PC-3 (cell line): ENCODE measurements at regions of chr7 and their contacts with region 1.

Region 1: DNA sequence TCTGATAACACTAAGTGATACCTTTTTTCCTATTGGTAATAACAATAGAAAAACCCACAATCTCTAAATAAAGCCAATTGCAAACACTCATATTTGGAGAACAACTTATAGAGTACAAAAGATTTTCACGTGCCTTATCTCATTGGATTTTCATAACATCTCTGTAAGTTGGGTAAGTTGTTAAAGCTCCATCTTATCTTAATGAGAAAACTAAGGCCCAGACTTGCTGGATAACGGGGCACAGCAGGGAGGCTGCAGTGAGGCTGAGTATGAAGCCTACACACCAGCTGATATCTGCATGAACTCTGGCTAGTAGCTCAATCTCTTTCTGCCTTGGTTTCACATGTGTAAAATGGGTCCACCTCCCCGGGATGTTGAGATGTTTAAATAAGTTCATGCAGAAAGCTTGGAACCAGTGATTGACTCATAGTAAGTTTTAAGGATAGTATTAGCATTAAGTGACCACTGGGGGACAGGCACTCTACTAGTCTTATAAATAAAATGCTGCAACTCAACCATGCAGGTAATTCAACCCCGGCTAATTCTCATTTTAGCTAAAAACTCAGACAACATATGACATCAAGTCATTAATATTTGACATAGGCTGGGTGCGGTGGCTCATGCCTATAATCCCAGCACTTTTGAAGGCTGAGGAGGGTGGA is 26.7 kb downstream of the CPVL start:
- DNase-seq: no peak
- ATAC-seq: no peak
- H3K4me3 ChIP-seq: no peak overlapping the region
- H3K27ac ChIP-seq: no peak overlapping the region
- H3K4me1 ChIP-seq: peaks cover 32% of the 10 kb centered on the region
- H3K27me3 ChIP-seq: no peaks in the 10 kb centered on the region
- CTCF ChIP-seq: peak; percentile 40

Region 2: GRCh38 chr7:29135846-29136245 is 16.2 kb after region 1 on chr7:
- CTCF ChIA-PET with region 1: no interaction called
- POLR2A ChIA-PET with region 1: no interaction called
- intact Hi-C with region 1: no loop called
- DNase-seq: no peak
- ATAC-seq: no peak
- H3K4me3 ChIP-seq: no peak overlapping the region
- H3K27ac ChIP-seq: no peak overlapping the region
- H3K4me1 ChIP-seq: peaks cover 24% of the 10 kb centered on the region
- H3K27me3 ChIP-seq: no peaks in the 10 kb centered on the region
- CTCF ChIP-seq: no peak

Region 3: DNA sequence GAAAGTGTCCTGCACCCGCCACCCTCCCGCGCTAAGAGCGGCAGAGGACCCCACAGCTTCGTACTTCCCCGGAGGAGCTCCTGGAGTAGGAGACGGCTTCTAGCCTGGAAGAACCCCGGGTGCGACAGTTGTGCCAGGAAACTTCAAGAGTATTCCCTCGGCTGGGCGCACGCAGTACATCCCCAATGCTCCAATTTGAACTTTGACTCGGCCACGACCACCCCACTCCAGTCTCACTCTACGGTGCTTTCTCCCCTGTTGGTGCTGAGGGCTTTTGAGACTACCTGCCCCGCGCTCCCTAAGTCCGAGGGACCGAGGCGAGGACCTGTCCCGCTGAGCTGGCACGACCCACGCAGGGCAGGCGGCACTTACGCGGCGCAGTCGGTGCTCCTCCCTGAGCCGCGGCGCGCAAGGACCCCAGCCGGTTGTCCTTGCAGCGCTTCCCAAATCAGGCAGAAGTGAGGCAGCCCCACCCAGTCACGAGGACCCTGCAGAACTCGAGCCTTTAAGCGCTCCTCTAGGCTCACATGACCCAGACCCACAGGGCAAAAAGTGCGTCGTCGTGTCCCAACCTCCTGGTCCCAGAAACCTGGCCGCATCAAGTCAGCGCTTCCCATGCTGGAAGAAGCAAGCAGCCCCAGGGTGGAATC is 26.5 kb after region 1 on chr7 and contains the start of gene CPVL:
- CTCF ChIA-PET with region 1: no interaction called
- POLR2A ChIA-PET with region 1: no interaction called
- intact Hi-C with region 1: loop called (anchors 2 kb)
- DNase-seq: peak; percentile 73
- ATAC-seq: peak; percentile 75
- H3K4me3 ChIP-seq: peak within 1 kb of the TSS; percentile 73
- H3K27ac ChIP-seq: peak within 1 kb of the TSS; percentile 13; the same call in 1 of the 2 replicates
- H3K4me1 ChIP-seq: peaks cover 17% of the 10 kb centered on the region
- H3K27me3 ChIP-seq: no peaks in the 10 kb centered on the region
- CTCF ChIP-seq: no peak
- total RNA-seq, gene CPVL: 14.7 and 15.3 TPM in 2 replicates